Heart right ventricle (tissue), 16 donors: ENCODE measurements at regions of chr20 and their contacts with region 1.

Region 1: DNA sequence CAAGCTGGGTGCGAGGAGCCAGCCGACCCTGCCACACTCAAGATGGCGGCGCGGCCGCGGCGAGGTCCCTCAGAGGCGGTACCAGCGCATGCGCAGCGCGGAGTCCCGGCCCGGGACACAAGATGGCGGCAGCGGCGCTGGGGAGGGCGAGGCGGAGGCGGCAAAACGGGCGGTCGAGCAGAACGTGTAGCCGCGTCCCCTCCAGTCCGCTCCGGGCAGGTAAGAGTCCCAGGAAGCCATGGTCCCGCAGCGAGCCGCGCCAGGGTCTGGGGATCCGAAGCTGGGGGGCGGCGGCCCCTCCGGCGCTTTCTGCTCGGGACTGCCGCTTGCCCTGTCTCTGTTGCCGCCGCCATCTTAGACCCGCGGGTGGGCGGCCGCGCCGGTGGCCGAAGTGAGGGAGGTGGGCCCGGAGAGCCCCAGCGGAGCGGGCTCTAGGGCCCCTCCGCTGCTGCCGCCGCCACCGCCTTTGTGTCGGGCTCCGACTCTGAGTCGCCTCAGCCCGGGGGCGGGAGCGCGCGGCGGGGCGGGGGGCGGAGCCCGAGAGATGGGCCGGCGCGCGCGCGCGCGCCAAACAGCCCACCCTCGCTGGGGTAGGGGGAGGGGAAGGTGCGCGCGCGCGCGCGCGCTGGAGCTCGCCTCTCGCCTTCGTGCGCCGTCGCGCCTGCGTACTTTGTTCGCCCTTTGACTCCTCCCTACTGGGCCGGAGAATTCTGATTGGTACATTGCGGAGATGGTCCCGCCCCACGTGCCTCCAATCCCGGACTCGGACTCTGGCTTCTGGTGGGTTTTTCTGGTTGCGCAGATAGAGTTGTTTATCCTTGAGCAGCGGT is at the start of gene PCIF1:
- DNase-seq: peak; percentile 98 to 99
- ATAC-seq: peak; percentile 88 to 94 (median 92)
- H3K4me3 ChIP-seq: peak within 1 kb of the TSS; percentile 64 to 100 (median 96)
- H3K27ac ChIP-seq: peak within 1 kb of the TSS; percentile 99 to 100 (median 100)
- H3K4me1 ChIP-seq: peaks cover 0 to 38% (median 23%) of the 10 kb centered on the region in 9 donors
- H3K27me3 ChIP-seq: no peaks in the 10 kb centered on the region
- CTCF ChIP-seq: peak in 2 of 9 donors; percentile 6 to 13
- total RNA-seq, gene PCIF1: 23.6 to 33.1 (median 27.4) TPM

Region 2: GRCh38 chr20:45823949-45824835 is 110.6 kb before region 1 on chr20:
- intact Hi-C with region 1: loop called in 1 of 10 experiments (anchors 10 kb)
- DNase-seq: peak in 1 of 2 donors; percentile 60
- ATAC-seq: peak; percentile 57 to 76 (median 67)
- H3K4me3 ChIP-seq: peak overlapping the region in 5 of 10 donors; percentile 3 to 30 (median 28)
- H3K27ac ChIP-seq: no peak overlapping the region
- H3K4me1 ChIP-seq: peaks cover 4 to 40% (median 26%) of the 10 kb centered on the region in 9 donors
- H3K27me3 ChIP-seq: peaks cover 3 to 53% (median 35%) of the 10 kb centered on the region in 7 donors
- CTCF ChIP-seq: peak; percentile 5 to 61 (median 49)

Region 3: GRCh38 chr20:45890985-45891983 is 43.5 kb before region 1 on chr20 and contains the starts of genes CTSA and NEURL2:
- intact Hi-C with region 1: loop called in 6 of 10 experiments (anchors 2 kb)
- DNase-seq: peak; percentile 94 to 95
- ATAC-seq: peak; percentile 88 to 96 (median 92)
- H3K4me3 ChIP-seq: peak within 1 kb of the TSS; percentile 69 to 88 (median 74)
- H3K27ac ChIP-seq: peak within 1 kb of the TSS; percentile 78 to 97 (median 92)
- H3K4me1 ChIP-seq: peaks cover 10 to 47% (median 30%) of the 10 kb centered on the region in 9 donors
- H3K27me3 ChIP-seq: no peaks in the 10 kb centered on the region
- CTCF ChIP-seq: peak in 2 of 9 donors; percentile 11 to 21
- total RNA-seq, gene CTSA: 75.1 to 173 (median 112) TPM
- total RNA-seq, gene NEURL2: 6.2 to 11.1 (median 8.3) TPM

Region 4: DNA sequence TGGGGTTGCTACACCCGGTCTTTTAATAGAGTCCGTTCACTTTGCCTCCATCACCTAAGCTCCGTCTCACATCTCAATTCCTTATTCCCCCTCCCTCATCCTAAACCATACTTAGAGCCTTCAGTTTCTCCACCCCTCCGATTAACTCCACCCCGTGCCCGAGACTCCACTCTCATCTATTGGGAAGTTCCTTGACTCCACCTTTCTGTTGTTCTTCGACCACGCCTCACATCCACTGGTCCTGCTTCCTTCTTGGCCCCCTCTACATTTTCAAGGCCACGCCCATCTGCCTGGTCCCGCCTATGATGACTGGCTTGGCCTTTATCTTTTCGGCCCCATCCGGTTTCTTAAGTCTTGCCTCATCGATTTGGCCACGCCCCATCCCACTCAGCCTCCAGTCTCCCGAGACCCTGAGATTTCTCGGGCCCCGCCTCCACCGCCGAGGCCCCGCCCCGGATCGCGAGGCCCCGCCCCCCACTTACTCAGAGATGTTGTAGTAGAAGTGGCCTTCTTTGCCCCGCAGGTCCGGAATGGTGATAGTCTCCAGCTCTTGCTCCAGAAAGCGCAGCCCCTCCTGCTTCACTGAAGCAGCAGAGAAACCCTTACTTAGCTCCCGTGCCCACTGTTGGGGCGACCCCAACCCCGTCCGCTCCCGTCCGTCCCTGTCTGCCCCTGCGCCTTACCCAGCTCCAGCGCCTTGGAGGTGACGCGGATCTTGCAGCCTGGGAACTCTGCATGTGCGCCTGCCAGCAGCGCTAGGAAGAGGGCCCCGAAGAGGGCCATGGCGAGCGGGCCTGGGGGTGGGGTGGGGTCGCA is 23.9 kb before region 1 on chr20:
- intact Hi-C with region 1: loop called in 2 of 10 experiments (anchors 2 kb)
- DNase-seq: peak; percentile 95 to 97
- ATAC-seq: peak; percentile 87 to 95 (median 91)
- H3K4me3 ChIP-seq: peak overlapping the region; percentile 33 to 64 (median 58)
- H3K27ac ChIP-seq: peak overlapping the region; percentile 19 to 84 (median 80)
- H3K4me1 ChIP-seq: peaks cover 6 to 59% (median 27%) of the 10 kb centered on the region in 9 donors
- H3K27me3 ChIP-seq: peaks cover 0 to 11% (median 0%) of the 10 kb centered on the region in 7 donors
- CTCF ChIP-seq: no peak

Region 5: DNA sequence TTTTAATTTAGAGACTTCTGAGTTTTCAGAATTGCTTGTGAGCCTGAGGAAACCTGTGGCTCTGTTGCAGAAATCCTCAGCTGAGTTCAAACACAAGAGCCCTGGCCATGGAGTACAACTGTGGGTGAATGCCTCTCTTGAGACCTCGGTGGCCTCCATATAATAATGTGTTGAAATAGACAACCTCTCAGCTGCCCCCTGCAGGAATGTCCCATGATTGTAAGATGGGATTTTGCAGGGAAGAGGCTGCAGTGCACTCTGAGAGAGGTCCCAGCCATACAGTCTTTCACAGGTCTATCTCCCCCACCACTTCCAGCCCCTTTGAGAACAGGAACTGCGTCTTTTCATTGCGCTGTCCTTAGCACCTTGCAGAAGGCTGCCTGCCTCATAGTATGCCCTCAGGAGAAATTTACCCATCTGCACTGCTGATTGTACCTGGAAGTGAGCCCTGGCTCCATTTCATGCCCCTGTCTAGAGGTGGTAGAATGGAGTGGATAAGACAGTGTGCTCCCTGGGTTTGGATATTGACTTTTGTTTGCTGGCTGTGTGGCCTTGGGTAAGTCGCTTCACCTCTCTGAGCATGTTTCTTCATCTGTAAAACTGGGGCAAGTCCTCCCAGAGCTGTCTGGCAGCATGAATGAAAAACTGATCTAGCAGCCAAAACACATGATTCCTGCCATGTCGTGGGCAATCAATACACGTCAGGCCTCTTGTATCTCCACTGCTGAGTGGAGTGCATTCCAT is 390.3 kb after region 1 on chr20:
- intact Hi-C with region 1: no loop called
- DNase-seq: no peak
- ATAC-seq: peak in 1 of 8 donors; percentile 17
- H3K4me3 ChIP-seq: no peak overlapping the region
- H3K27ac ChIP-seq: no peak overlapping the region
- H3K4me1 ChIP-seq: peaks cover 0 to 2% (median 0%) of the 10 kb centered on the region in 9 donors
- H3K27me3 ChIP-seq: peaks cover 6 to 94% (median 83%) of the 10 kb centered on the region in 7 donors
- CTCF ChIP-seq: peak in 6 of 9 donors; percentile 17 to 47 (median 32)